Left ventricle myocardium inferior (tissue), 1 donor: ENCODE measurements at regions of chr1 and their contacts with region 1.

Region 1: DNA sequence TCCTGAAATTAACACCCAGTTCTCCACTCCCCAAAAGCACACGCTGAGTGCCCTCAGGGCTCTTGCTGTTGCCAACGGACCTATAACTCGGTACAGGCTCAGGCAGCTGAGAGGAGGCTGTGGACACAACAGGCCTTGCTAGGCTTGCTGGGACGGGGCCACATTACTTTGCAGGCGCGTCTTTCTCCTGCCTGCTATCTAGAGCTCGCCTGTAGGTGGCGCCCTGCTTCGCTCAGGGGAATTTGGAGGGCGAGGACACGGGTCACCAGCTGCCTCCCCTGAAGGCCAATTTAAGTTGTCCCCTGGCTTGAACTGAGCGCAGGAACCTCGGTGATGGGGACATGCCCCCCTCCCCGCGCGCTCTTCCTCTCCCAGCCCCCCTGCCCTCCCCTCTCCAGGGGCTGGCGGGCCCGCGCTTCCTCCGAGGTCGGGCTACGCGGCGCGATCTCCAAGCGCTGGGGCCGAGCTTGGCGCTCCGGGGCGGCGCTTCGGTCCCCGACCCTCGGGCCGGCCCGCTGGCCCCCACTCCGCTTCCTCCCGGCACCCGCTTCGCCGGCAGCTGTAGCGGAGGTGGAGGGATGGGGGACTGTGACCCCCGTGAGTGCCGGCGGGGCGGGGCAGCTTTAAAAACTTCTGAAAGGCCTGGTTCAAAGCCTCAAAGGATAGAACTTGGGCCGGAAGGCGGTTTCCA is 32.4 kb upstream of the NFIA start:
- DNase-seq: peak; percentile 96
- H3K4me3 ChIP-seq: peak overlapping the region; percentile 90
- H3K27ac ChIP-seq: peak overlapping the region; percentile 100
- H3K4me1 ChIP-seq: peaks cover 57% of the 10 kb centered on the region
- H3K27me3 ChIP-seq: no peaks in the 10 kb centered on the region
- CTCF ChIP-seq: peak; percentile 99

Region 2: DNA sequence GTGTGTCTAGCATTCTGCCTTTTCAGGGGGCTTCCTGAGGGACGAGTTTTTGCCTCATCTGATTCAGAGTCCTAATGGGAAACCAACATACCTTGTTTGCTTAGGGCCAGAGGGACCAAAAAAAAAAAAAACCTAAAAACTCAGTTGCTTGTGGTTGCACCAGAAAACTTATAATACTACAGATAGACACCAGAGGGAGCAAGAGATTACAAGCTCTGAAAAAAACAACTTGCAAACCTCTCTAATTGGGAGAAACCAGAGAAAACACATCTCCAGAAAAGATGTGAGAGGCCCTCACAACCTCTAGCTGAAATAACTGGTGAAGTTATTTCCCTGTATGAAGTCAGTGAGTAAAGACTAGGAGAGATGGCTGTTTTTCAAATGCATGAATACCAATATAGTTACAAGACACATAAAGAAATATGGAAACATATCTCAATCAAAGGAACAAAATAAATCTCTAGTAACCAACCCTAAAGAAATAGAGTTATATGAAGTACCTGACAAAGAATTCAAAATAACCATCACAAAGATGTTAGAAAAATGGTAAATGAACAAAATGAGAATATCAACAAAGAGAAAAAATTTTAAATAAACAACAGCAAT is 201.3 kb before region 1 on chr1:
- intact Hi-C with region 1: loop called (anchors 10 kb)
- DNase-seq: no peak
- H3K4me3 ChIP-seq: no peak overlapping the region
- H3K27ac ChIP-seq: no peak overlapping the region
- H3K4me1 ChIP-seq: no peaks in the 10 kb centered on the region
- H3K27me3 ChIP-seq: no peaks in the 10 kb centered on the region
- CTCF ChIP-seq: peak; percentile 63

Region 3: GRCh38 chr1:60963167-60963940 is 86.6 kb before region 1 on chr1:
- intact Hi-C with region 1: no loop called
- DNase-seq: no peak
- H3K4me3 ChIP-seq: no peak overlapping the region
- H3K27ac ChIP-seq: no peak overlapping the region
- H3K4me1 ChIP-seq: no peaks in the 10 kb centered on the region
- H3K27me3 ChIP-seq: no peaks in the 10 kb centered on the region
- CTCF ChIP-seq: no peak

Region 4: GRCh38 chr1:60978421-60979357 is 71.3 kb before region 1 on chr1:
- intact Hi-C with region 1: loop called (anchors 10 kb)
- DNase-seq: peak; percentile 30
- H3K4me3 ChIP-seq: no peak overlapping the region
- H3K27ac ChIP-seq: no peak overlapping the region
- H3K4me1 ChIP-seq: peaks cover 10% of the 10 kb centered on the region
- H3K27me3 ChIP-seq: no peaks in the 10 kb centered on the region
- CTCF ChIP-seq: peak; percentile 65

Region 5: DNA sequence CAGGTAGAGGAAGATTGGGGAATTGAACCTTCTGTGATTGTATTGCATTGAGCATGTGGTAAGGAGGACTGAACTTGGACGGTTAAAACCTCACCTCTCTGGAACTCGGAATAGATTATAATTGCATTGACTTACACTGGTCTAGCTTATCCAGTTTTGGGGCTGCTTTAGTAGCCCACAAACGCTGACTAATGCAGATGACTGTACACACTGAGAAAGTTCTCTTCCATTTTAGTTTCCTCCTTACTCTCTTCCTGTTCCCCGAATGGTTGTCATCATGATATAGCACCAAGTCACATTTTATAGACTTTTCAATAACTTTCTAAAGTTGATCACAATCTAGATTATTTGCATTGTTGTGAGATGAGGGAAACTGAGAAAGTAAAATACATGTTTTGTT is 110.5 kb after region 1 on chr1:
- intact Hi-C with region 1: no loop called
- DNase-seq: no peak
- H3K4me3 ChIP-seq: no peak overlapping the region
- H3K27ac ChIP-seq: peak overlapping the region; percentile 79
- H3K4me1 ChIP-seq: peaks cover 79% of the 10 kb centered on the region
- H3K27me3 ChIP-seq: no peaks in the 10 kb centered on the region
- CTCF ChIP-seq: no peak

Region 6: DNA sequence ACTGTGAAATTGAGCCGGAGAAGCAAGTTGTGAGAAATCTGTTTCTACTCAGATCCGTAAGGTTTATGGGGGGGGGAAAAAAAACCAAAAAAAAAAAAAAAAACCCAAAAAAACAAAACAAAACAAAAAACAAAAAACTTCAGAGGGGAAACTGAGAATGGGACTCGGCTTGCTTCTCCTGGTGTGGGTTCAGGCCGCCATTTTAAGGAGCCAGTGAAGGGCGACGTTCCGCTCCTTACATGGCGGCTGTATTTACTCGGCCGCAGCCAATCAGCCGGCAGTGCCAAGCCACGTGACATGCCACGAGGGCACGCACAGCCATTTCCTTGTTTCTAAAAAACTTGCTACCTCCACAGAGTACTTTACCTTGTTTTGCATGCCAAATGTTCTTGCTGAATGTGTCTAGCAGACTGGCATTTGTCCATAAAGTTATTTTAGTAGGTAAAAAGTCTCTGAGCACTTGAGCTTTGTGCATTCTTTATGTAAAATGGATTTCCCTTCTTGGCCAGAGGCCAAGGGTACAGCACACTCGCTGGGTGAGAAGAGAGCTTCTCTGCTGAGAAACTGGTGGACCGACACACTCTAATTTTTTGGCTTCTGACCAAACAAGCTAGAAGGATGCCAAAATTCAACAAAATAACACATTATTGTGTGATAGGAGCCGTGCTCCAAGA is 134.2 kb after region 1 on chr1:
- intact Hi-C with region 1: loop called (anchors 10 kb)
- DNase-seq: peak; percentile 93
- H3K4me3 ChIP-seq: peak overlapping the region; percentile 62
- H3K27ac ChIP-seq: peak overlapping the region; percentile 93
- H3K4me1 ChIP-seq: peaks cover 91% of the 10 kb centered on the region
- H3K27me3 ChIP-seq: no peaks in the 10 kb centered on the region
- CTCF ChIP-seq: no peak

Region 7: GRCh38 chr1:61453111-61453961 is 403.3 kb after region 1 on chr1:
- intact Hi-C with region 1: loop called (anchors 5 kb)
- DNase-seq: peak; percentile 87
- H3K4me3 ChIP-seq: no peak overlapping the region
- H3K27ac ChIP-seq: peak overlapping the region; percentile 84
- H3K4me1 ChIP-seq: peaks cover 63% of the 10 kb centered on the region
- H3K27me3 ChIP-seq: no peaks in the 10 kb centered on the region
- CTCF ChIP-seq: peak; percentile 87